HEK293 (cell line): ENCODE measurements at regions of chr2 and their contacts with region 1.

Region 1: DNA sequence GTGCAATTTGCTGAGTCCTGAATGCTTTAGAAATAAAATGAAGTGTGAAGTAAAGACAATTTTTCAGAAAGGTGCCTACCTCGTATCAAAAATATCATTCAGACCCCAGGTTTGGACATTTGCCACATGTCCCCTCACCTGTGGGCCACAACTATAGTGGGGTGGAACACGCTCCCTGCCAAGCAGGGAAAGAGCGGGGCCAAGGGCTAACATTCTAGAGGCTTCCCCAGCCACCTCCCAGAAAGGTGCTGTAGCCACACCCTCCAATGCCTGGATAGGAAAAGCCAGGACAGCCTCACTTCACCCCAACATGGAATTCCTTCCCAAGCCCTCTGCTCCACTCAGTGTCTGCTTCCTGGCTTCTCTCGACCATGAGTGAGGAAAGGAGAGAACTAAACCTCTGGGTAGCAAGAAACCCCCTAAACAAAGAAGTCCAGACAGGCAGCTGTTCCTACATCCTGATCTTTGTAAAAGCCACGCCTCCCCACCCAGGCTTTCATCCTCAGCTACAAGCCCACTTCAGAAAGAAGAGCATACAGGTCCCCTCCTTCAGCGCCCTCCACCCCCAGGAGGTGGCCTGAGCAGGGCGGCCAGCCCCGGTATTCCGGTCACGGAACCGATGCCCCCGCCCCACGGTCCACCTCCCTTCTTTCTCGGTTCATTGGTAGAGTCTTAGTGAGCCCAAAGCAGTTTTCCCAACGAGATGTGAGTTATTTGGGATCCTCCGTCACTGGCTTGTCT is 2.1 kb downstream of the COL6A3 start:
- H3K4me3 ChIP-seq: no peak overlapping the region
- H3K27ac ChIP-seq: no peak overlapping the region
- H3K4me1 ChIP-seq: no peaks in the 10 kb centered on the region
- CTCF ChIP-seq: no peak

Region 2: GRCh38 chr2:237154082-237154638 is 257.7 kb before region 1 on chr2:
- CTCF ChIA-PET with region 1: interaction called, 42 read pairs
- POLR2A ChIA-PET with region 1: no interaction called
- H3K4me3 ChIP-seq: no peak overlapping the region
- H3K27ac ChIP-seq: no peak overlapping the region
- H3K4me1 ChIP-seq: no peaks in the 10 kb centered on the region
- CTCF ChIP-seq: peak; percentile 43; the same call in 1 of the 2 replicates

Region 3: GRCh38 chr2:237165405-237166276 is 246.2 kb before region 1 on chr2:
- CTCF ChIA-PET with region 1: interaction called, 36 read pairs
- POLR2A ChIA-PET with region 1: no interaction called
- H3K4me3 ChIP-seq: no peak overlapping the region
- H3K27ac ChIP-seq: no peak overlapping the region
- H3K4me1 ChIP-seq: no peaks in the 10 kb centered on the region
- CTCF ChIP-seq: no peak

Region 4: GRCh38 chr2:237782181-237782580 is 370.3 kb after region 1 on chr2:
- CTCF ChIA-PET with region 1: no interaction called
- POLR2A ChIA-PET with region 1: no interaction called
- H3K4me3 ChIP-seq: no peak overlapping the region
- H3K27ac ChIP-seq: no peak overlapping the region
- H3K4me1 ChIP-seq: no peaks in the 10 kb centered on the region
- CTCF ChIP-seq: no peak